Activated CD8-positive, alpha-beta T cell treated with anti-CD3 and anti-CD28 coated beads, Interleukin-2, amount 10 ng/mL, durations not matched to agents 7 days and 5 days (primary cell): ENCODE measurements at regions of chr17 and their contacts with region 1.

Region 1: DNA sequence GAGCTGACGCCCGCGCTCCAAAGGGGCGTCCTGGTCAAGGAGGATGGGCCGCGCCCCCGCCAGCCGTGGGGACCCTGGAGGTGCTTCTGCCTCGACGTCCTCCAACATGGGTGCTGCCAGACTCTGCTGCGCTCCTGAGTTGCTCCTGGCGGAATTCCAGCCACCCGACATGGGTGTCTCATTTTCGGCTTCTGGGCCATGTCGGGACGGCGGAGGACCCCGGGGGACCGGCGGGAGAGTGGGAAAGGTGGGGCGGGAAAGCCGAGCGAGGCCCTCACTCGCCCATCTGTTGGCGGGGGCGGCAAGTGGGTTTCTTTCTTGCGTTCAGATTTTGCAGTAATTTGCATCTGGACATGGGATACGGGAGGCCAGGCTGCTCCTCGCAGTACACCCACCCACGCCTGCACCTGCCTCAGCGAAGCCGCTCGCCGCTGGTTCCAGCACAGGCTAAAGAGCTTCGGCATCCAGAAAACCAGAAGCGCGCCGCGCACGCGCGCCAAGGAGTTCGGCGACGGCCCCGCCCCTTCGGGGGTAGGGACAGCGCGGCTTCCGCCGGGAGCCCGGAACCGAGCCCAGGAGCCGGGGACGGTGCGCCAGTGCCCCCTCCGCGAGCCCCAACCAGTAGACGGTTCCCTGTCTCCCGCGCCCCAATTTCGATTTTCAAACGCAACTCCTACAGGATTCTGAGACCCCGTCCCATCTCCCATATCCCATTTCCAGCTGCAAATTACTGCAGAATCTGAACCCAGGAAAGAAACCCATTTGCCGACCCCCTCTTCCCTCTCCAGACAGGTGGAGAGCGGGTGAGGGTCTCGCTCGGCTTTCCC is at the start of gene ARMC7:
- DNase-seq: peak; percentile 92
- ATAC-seq: peak; percentile 86
- H3K4me3 Mint-ChIP-seq: peak within 1 kb of the TSS; percentile 92
- H3K27ac Mint-ChIP-seq: peak within 1 kb of the TSS; percentile 87
- H3K4me1 Mint-ChIP-seq: peaks cover 48% of the 10 kb centered on the region
- H3K27me3 Mint-ChIP-seq: no peaks in the 10 kb centered on the region
- total RNA-seq, gene ARMC7: 16.1 to 17.0 TPM

Region 2: GRCh38 chr17:75012346-75013091 is 97.1 kb before region 1 on chr17 and contains the start of gene MRPL58:
- CTCF ChIA-PET with region 1: interaction called, 23 read pairs
- POLR2A ChIA-PET with region 1: interaction called, 11 read pairs
- DNase-seq: peak; percentile 90
- ATAC-seq: peak; percentile 96
- H3K4me3 Mint-ChIP-seq: peak within 1 kb of the TSS; percentile 95
- H3K27ac Mint-ChIP-seq: peak within 1 kb of the TSS; percentile 93
- H3K4me1 Mint-ChIP-seq: peaks cover 15% of the 10 kb centered on the region
- H3K27me3 Mint-ChIP-seq: no peaks in the 10 kb centered on the region
- total RNA-seq, gene MRPL58: 45.1 to 45.8 TPM

Region 3: GRCh38 chr17:75124041-75124818 is 14.6 kb after region 1 on chr17:
- CTCF ChIA-PET with region 1: interaction called, 115 read pairs
- POLR2A ChIA-PET with region 1: interaction called, 28 read pairs
- DNase-seq: no peak
- ATAC-seq: peak; percentile 58
- H3K4me3 Mint-ChIP-seq: no peak overlapping the region
- H3K27ac Mint-ChIP-seq: peak overlapping the region; percentile 85
- H3K4me1 Mint-ChIP-seq: peaks cover 33% of the 10 kb centered on the region
- H3K27me3 Mint-ChIP-seq: no peaks in the 10 kb centered on the region

Region 4: DNA sequence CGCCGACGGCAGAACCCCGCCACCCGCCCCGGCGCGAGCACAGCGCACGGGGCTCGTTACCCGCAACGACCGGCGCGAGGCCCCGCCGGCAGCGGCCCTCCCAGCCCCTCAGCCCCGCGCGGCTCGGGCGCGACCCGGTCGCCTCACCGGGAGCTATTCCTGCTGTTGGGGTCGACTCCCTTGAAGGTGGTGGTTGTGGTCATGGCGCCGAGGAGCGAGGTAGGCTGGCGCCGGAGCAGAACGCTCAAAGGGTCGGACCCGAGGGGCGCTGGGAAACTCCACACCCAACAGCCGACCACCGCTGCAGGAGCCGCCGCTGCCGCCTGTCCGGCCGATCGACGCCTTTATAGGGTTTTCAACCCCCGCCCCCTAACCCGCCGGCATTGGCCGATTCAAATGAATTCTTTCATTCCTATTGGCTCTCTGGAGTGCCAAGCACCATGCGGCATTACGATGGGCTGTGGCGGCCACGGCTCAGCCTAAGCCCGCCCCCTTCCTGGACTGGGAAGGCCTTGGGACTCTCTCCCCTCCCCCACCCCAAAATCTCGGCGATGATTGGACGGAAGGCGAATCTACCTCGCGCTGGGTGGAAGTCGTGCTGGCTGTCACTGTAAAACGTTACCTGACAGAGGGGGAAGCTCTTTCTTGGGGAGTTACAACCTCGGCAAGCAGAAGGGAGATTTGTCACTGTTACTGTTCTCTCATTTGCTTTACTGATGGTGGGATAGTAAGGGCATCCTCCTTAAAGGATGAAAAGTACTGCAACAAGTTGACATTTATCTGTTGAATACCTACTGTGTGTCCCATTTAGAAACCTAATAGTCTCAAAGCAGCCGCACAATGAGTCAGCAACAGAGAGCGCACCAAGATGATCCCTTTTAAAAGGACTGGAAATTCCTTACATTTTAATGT is 44.8 kb after region 1 on chr17 and contains the start of gene JPT1:
- CTCF ChIA-PET with region 1: interaction called, 12 read pairs
- POLR2A ChIA-PET with region 1: interaction called, 15 read pairs
- DNase-seq: peak; percentile 99
- ATAC-seq: peak; percentile 96
- H3K4me3 Mint-ChIP-seq: peak within 1 kb of the TSS; percentile 96
- H3K27ac Mint-ChIP-seq: peak within 1 kb of the TSS; percentile 92
- H3K4me1 Mint-ChIP-seq: peaks cover 36% of the 10 kb centered on the region
- H3K27me3 Mint-ChIP-seq: no peaks in the 10 kb centered on the region
- total RNA-seq, gene JPT1: 301 to 319 TPM

Region 5: GRCh38 chr17:75199886-75200618 is 90.4 kb after region 1 on chr17:
- CTCF ChIA-PET with region 1: interaction called, 210 read pairs
- POLR2A ChIA-PET with region 1: interaction called, 8 read pairs
- DNase-seq: no peak
- ATAC-seq: no peak
- H3K4me3 Mint-ChIP-seq: no peak overlapping the region
- H3K27ac Mint-ChIP-seq: no peak overlapping the region
- H3K4me1 Mint-ChIP-seq: peaks cover 12% of the 10 kb centered on the region
- H3K27me3 Mint-ChIP-seq: no peaks in the 10 kb centered on the region

Region 6: DNA sequence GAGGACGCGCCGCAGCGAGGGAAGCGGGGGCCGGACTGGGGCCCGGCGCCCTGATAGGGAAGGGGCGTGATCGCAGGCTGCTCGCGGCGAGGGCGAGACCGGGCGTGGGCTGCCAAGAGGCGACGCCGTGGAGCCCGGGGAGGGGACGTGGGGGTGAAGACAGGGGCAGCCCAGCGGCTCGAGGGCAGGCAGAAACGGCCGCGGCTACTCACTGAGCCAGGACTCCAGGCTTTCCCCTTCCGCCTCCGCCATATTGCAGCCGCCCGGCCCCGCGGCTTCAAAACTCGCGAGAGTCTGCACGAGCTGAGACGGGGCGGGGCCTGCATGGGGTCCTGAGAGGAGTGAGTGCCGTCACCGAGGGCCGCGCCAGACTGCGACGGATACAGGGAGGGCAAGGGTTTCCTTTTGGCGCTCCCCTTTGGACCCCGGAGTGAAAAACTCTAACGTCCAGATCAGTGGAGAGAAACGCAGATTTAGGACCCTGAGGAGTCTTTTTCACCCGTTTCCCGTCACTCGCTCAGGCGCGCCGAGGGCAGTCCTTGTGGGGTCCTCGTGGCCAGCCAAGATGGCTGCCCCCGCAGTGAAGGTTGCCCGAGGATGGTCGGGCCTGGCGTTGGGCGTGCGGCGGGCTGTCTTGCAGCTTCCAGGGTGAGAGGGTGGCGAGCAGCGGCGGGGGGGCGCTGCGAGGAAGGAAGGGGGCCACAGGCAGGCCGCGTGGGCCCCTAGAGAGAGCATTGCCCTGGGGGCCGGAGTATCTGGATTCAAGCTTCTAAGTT is 151.9 kb after region 1 on chr17 and contains the starts of genes GGA3 and MRPS7:
- CTCF ChIA-PET with region 1: interaction called, 27 read pairs
- POLR2A ChIA-PET with region 1: no interaction called
- DNase-seq: peak; percentile 97
- ATAC-seq: peak; percentile 94
- H3K4me3 Mint-ChIP-seq: peak within 1 kb of the TSS; percentile 95
- H3K27ac Mint-ChIP-seq: peak within 1 kb of the TSS; percentile 99
- H3K4me1 Mint-ChIP-seq: peaks cover 38% of the 10 kb centered on the region
- H3K27me3 Mint-ChIP-seq: no peaks in the 10 kb centered on the region
- total RNA-seq, gene GGA3: 65.7 to 75.4 TPM
- total RNA-seq, gene MRPS7: 62.1 to 66.1 TPM